A673 (cell line): ENCODE measurements at regions of chr10 and their contacts with region 1.

Region 1: GRCh38 chr10:36634916-36635315 is 490.5 kb upstream of the ANKRD30A start:
- DNase-seq: peak; percentile 95
- H3K4me3 ChIP-seq: peak overlapping the region; percentile 8
- H3K27ac ChIP-seq: peak overlapping the region; percentile 97
- H3K4me1 ChIP-seq: peaks cover 55% of the 10 kb centered on the region
- H3K27me3 ChIP-seq: no peaks in the 10 kb centered on the region
- CTCF ChIP-seq: no peak

Region 2: DNA sequence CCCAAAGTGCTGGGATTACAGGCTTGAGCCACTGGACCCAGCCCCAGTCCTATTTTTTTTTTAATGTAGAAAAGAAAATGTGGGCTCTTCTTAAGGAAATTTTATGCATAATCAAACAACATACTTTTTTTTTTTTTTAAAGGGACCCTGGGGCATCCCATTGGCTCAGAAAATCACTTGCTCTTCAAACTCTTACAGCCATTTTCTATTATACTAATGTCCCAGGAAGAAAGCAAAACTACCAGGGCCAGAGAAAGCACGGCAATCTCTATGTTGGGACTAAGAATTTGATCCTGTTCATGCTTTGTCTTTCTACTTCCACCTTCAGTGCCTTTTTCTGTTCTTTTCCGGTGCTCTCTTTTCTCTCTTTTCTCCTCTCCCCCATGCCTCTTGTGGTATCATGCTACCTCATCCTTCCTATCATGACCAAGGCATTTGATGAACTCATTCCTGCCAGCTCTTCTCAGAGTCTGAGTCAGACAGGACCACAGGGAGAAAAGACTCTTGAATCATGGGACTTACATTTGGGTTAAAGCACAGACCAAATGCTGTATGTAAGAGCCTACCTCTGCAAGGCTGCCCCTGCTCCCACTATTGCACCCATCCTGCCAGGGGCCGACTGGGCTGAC is 1375.0 kb before region 1 on chr10:
- CTCF ChIA-PET with region 1: no interaction called
- POLR2A ChIA-PET with region 1: no interaction called
- intact Hi-C with region 1: loop called (anchors 10 kb)
- DNase-seq: peak; percentile 51
- H3K4me3 ChIP-seq: no peak overlapping the region
- H3K27ac ChIP-seq: peak overlapping the region; percentile 40
- H3K4me1 ChIP-seq: no peaks in the 10 kb centered on the region
- H3K27me3 ChIP-seq: no peaks in the 10 kb centered on the region
- CTCF ChIP-seq: no peak

Region 3: GRCh38 chr10:35563261-35563891 is 1071.5 kb before region 1 on chr10:
- CTCF ChIA-PET with region 1: no interaction called
- POLR2A ChIA-PET with region 1: no interaction called
- intact Hi-C with region 1: no loop called
- DNase-seq: peak; percentile 88
- H3K4me3 ChIP-seq: no peak overlapping the region
- H3K27ac ChIP-seq: no peak overlapping the region
- H3K4me1 ChIP-seq: peaks cover 15% of the 10 kb centered on the region
- H3K27me3 ChIP-seq: no peaks in the 10 kb centered on the region
- CTCF ChIP-seq: peak; percentile 100

Region 4: GRCh38 chr10:35889971-35890677 is 744.8 kb before region 1 on chr10:
- CTCF ChIA-PET with region 1: no interaction called
- POLR2A ChIA-PET with region 1: no interaction called
- intact Hi-C with region 1: loop called (anchors 10 kb)
- DNase-seq: peak; percentile 71
- H3K4me3 ChIP-seq: no peak overlapping the region
- H3K27ac ChIP-seq: no peak overlapping the region
- H3K4me1 ChIP-seq: peaks cover 24% of the 10 kb centered on the region
- H3K27me3 ChIP-seq: no peaks in the 10 kb centered on the region
- CTCF ChIP-seq: no peak

Region 5: DNA sequence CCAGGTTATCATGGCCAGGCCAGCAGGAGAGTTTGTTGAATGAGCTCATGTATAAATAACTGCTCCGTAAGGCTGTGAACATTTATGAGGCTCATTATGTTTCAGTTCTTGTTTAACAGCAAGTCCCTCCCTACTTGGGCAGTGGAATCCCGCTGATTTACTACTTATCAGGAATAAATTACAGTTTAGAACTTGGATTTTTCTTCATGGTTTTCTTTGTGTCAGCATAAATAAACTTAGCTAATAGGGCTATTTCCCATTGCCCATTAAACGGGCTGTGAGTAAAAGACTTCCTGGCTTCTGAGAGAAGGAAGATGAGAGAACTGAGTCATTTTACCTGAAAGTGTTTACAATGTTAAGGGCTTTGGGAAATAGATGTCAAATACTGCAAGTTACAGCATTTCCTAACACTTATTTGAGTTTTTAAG is 211.1 kb before region 1 on chr10:
- CTCF ChIA-PET with region 1: no interaction called
- POLR2A ChIA-PET with region 1: no interaction called
- intact Hi-C with region 1: loop called (anchors 2 kb)
- DNase-seq: peak; percentile 97
- H3K4me3 ChIP-seq: no peak overlapping the region
- H3K27ac ChIP-seq: no peak overlapping the region
- H3K4me1 ChIP-seq: peaks cover 26% of the 10 kb centered on the region
- H3K27me3 ChIP-seq: no peaks in the 10 kb centered on the region
- CTCF ChIP-seq: no peak

Region 6: DNA sequence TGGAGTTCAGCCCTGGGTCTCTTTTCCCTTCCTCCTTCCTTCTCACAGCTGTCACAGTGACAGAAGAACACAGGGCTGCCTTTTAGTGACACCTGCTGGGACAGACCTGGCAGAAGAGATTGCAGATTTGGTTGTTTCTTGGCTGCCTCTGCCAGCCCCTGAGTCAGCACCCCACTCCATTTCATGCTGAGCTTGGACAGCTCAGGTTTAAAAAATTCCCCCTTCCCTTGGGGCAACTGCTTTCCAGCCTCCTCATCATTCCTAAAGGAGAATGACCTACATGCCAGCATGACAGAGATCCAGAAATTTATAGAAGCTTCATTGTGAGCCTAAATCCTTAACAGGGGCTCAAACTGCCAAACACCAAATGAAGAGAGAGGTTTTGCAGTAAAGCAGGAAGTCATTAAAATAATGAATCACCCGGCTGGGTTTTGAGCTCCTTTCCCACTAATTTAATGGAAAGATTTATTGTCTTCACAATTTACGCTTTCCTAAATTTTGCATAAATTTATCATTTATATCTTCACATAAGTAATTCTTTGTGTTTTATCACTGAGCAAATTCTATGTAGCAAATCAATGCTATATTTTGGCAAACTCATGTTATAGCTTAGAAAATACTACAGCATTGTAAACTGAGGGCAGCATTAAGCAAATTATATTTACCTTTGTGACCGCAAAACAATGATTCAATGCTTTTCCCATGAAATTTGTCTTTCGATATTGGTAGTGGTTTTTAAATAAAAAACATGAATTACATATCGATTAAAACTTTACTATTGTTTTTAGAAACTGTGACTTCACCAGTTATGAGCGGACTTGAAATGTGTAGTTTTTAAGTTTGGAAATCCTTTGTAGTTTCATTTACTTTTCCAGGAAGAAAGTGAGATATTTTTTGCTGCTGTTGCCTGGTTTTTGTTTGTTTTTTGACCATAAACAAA is 90.9 kb after region 1 on chr10:
- CTCF ChIA-PET with region 1: interaction called, 6 read pairs
- POLR2A ChIA-PET with region 1: no interaction called
- intact Hi-C with region 1: loop called (anchors 2 kb)
- DNase-seq: peak; percentile 98
- H3K4me3 ChIP-seq: no peak overlapping the region
- H3K27ac ChIP-seq: peak overlapping the region; percentile 54
- H3K4me1 ChIP-seq: peaks cover 51% of the 10 kb centered on the region
- H3K27me3 ChIP-seq: no peaks in the 10 kb centered on the region
- CTCF ChIP-seq: peak; percentile 76

Region 7: DNA sequence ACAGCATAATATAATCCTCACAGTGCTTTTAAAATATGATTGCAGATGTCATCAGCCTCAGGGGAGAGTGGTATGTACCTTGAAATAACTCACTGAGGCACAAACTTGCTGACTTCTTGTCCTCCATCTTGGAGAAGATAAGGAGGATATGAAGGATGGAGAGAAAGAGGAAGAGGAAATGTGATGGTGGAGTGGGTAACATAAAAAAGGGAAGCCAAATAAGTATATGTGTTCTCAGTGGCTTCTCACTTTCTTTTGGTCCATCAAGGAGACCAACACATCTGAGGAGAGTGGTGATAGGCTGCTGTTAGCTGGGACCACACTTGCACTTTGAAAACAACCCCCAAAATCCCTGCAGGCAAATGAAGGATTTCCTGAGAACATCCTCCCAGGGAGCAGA is 1437.6 kb after region 1 on chr10:
- CTCF ChIA-PET with region 1: no interaction called
- POLR2A ChIA-PET with region 1: no interaction called
- intact Hi-C with region 1: no loop called
- DNase-seq: no peak
- H3K4me3 ChIP-seq: no peak overlapping the region
- H3K27ac ChIP-seq: no peak overlapping the region
- H3K4me1 ChIP-seq: no peaks in the 10 kb centered on the region
- H3K27me3 ChIP-seq: no peaks in the 10 kb centered on the region
- CTCF ChIP-seq: no peak